AG04450 (cell line): ENCODE measurements at regions of chr1 and their contacts with region 1.

Region 1: GRCh38 chr1:44652445-44653106 is 21.7 kb downstream of the TMEM53 start:
- DNase-seq: no peak
- H3K4me3 ChIP-seq: no peak overlapping the region
- H3K27ac ChIP-seq: no peak overlapping the region
- H3K27me3 ChIP-seq: no peaks in the 10 kb centered on the region
- CTCF ChIP-seq: peak; percentile 98

Region 2: DNA sequence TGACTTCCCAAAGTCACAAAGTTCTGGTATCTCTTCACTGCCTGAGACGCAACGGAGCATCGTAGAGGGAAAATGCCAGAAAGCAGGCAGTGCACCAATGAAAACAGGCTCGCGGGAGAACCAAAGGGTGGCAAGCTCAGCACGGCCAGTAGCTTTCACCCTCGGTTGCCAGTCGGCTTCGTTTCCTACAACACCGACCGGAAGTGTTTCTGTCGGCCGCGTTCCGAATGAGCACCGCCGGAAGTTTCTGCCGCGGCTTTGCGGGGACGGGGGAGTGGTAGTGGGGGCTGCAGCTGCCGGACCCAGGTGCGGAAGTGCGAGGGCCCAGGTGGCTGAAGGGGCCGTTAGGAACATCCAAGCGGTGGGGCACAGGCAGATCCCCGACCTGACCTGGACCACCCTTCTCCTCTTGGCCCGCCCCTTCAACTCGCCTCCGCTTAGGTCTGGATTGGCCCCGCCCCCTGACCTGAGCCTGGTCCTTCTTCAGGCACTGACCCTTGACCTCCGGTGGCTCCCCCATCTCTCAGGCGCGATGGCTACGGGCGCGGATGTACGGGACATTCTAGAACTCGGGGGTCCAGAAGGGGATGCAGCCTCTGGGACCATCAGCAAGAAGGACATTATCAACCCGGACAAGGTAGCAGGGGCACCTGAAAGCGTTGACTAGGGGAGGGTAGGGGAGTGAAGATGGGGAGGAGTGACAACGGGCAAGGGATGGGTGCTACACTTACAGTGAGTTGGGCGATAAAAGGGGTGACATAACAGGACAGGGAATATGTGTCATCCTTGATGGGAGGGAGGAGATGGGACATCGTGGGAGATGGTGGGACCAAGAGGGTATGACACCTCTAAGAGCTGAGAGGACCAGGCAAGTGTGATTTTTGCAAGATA is 439.1 kb before region 1 on chr1 and contains the start of gene DMAP1:
- CTCF ChIA-PET with region 1: interaction called, 24 read pairs
- POLR2A ChIA-PET with region 1: interaction called, 3 read pairs
- DNase-seq: peak; percentile 69
- H3K4me3 ChIP-seq: peak within 1 kb of the TSS; percentile 100
- H3K27ac ChIP-seq: peak within 1 kb of the TSS; percentile 21
- H3K27me3 ChIP-seq: no peaks in the 10 kb centered on the region
- CTCF ChIP-seq: peak; percentile 14
- polyA plus RNA-seq, gene DMAP1: 27.0 and 31.5 TPM in 2 replicates

Region 3: GRCh38 chr1:44283524-44284173 is 368.9 kb before region 1 on chr1:
- CTCF ChIA-PET with region 1: no interaction called
- POLR2A ChIA-PET with region 1: no interaction called
- DNase-seq: no peak
- H3K4me3 ChIP-seq: no peak overlapping the region
- H3K27ac ChIP-seq: no peak overlapping the region
- H3K27me3 ChIP-seq: no peaks in the 10 kb centered on the region
- CTCF ChIP-seq: no peak

Region 4: DNA sequence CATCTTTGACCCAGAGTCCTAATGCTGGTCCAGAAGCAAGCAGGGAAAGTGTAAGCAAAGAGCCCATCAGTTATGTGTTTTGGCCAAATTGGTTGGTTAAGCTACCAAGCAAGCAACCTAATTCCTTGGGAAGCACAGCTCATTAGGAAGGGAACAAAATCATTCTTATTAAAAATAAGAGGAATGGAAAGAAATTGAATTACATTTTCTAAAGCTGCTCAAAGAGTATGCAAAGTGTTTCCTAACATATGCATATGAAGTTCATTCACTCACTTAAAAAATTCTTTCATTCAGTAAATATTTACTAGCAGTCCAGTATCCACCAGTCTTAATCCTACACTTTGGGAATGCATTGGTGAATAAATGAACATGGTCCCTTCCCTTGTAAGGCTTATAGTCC is 175.7 kb before region 1 on chr1:
- CTCF ChIA-PET with region 1: no interaction called
- POLR2A ChIA-PET with region 1: no interaction called
- DNase-seq: no peak
- H3K4me3 ChIP-seq: no peak overlapping the region
- H3K27ac ChIP-seq: no peak overlapping the region
- H3K27me3 ChIP-seq: peaks cover 27% of the 10 kb centered on the region
- CTCF ChIP-seq: no peak

Region 5: DNA sequence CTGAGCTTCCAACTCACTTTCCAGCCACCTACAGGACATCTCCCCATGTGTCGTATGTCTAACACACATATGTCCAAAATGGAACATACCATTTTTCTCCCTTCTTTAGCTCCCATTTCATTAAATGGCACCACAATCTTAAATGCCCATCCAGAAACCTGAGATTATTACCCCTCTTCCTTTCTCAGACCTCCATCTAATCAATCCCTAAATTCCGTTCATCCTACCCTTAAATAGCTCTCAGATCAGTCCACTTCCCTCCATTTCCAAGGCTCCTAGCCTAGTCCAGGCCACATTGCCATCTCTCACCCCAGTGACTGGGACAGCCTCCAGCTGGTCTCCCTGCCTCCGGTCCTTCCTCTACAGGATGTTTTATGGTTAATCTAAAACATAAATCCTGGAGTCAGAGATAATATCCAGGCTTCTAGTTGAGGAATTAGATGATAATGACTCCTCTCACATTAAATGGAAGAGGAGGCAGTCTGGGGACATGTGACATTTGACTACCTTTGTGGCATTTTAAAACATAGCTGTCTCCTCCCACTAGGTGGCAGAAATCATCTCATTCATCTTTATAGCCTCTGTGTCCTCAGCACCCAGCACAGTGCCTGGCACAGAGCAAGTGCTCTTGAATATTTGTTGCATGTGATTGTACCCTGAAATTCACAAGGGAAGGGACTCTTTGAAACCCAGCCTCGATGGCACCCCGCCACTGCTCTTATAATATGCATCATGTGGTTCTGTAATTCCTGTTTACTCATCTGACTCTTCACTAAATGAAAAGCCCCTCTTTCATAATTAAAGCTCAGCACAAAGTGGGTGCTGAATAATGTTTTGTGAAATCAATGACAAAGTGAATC is 80.6 kb before region 1 on chr1:
- CTCF ChIA-PET with region 1: interaction called, 16 read pairs
- POLR2A ChIA-PET with region 1: no interaction called
- DNase-seq: no peak
- H3K4me3 ChIP-seq: no peak overlapping the region
- H3K27ac ChIP-seq: no peak overlapping the region
- H3K27me3 ChIP-seq: peaks cover 52% of the 10 kb centered on the region
- CTCF ChIP-seq: peak; percentile 36

Region 6: GRCh38 chr1:44609412-44609767 is 43.2 kb before region 1 on chr1:
- CTCF ChIA-PET with region 1: interaction called, 221 read pairs
- POLR2A ChIA-PET with region 1: interaction called, 5 read pairs
- DNase-seq: no peak
- H3K4me3 ChIP-seq: no peak overlapping the region
- H3K27ac ChIP-seq: no peak overlapping the region
- H3K27me3 ChIP-seq: peaks cover 20% of the 10 kb centered on the region
- CTCF ChIP-seq: peak; percentile 74

Region 7: GRCh38 chr1:44631647-44632539 is 20.7 kb before region 1 on chr1:
- CTCF ChIA-PET with region 1: interaction called, 43 read pairs
- POLR2A ChIA-PET with region 1: interaction called, 3 read pairs
- DNase-seq: peak; percentile 65
- H3K4me3 ChIP-seq: peak overlapping the region; percentile 72
- H3K27ac ChIP-seq: peak overlapping the region; percentile 91
- H3K27me3 ChIP-seq: no peaks in the 10 kb centered on the region
- CTCF ChIP-seq: no peak

Region 8: GRCh38 chr1:44664730-44665370 is 12.3 kb after region 1 on chr1:
- CTCF ChIA-PET with region 1: interaction called, 15 read pairs
- POLR2A ChIA-PET with region 1: no interaction called
- DNase-seq: no peak
- H3K4me3 ChIP-seq: no peak overlapping the region
- H3K27ac ChIP-seq: no peak overlapping the region
- H3K27me3 ChIP-seq: no peaks in the 10 kb centered on the region
- CTCF ChIP-seq: no peak